A673 (cell line): ENCODE measurements at regions of chr4 and their contacts with region 1.

Region 1: GRCh38 chr4:122423246-122423645 is 33.3 kb downstream of the IL2 start:
- DNase-seq: no peak
- H3K4me3 ChIP-seq: no peak overlapping the region
- H3K27ac ChIP-seq: no peak overlapping the region
- H3K4me1 ChIP-seq: no peaks in the 10 kb centered on the region
- H3K27me3 ChIP-seq: no peaks in the 10 kb centered on the region
- CTCF ChIP-seq: no peak

Region 2: GRCh38 chr4:121597346-121597934 is 825.8 kb before region 1 on chr4:
- CTCF ChIA-PET with region 1: no interaction called
- POLR2A ChIA-PET with region 1: no interaction called
- intact Hi-C with region 1: no loop called
- DNase-seq: no peak
- H3K4me3 ChIP-seq: no peak overlapping the region
- H3K27ac ChIP-seq: no peak overlapping the region
- H3K4me1 ChIP-seq: no peaks in the 10 kb centered on the region
- H3K27me3 ChIP-seq: no peaks in the 10 kb centered on the region
- CTCF ChIP-seq: no peak

Region 3: DNA sequence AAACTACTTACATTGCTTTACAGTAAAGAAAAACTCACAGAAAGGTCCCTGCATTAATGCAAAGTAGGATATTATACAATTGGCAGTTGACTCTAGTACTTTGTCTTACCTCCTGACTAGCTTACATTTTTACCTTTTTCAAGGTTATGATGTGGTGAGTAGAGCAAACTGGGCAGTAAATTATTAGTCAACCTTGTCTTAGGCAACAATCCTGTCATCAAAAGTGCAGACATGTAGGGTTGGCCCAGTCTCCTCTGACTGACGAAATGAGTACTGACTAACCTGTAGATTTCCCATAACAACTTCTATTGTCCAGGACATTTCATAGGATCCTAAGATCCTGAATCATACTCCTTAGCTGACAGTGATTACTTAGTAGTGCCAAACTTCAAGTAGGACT is 641.1 kb after region 1 on chr4:
- CTCF ChIA-PET with region 1: no interaction called
- POLR2A ChIA-PET with region 1: no interaction called
- intact Hi-C with region 1: loop called (anchors 5 kb)
- DNase-seq: no peak
- H3K4me3 ChIP-seq: no peak overlapping the region
- H3K27ac ChIP-seq: no peak overlapping the region
- H3K4me1 ChIP-seq: peaks cover 13% of the 10 kb centered on the region
- H3K27me3 ChIP-seq: no peaks in the 10 kb centered on the region
- CTCF ChIP-seq: no peak